ENCODE measurements at regions of chr5 and their contacts with region 1.

Region 1: DNA sequence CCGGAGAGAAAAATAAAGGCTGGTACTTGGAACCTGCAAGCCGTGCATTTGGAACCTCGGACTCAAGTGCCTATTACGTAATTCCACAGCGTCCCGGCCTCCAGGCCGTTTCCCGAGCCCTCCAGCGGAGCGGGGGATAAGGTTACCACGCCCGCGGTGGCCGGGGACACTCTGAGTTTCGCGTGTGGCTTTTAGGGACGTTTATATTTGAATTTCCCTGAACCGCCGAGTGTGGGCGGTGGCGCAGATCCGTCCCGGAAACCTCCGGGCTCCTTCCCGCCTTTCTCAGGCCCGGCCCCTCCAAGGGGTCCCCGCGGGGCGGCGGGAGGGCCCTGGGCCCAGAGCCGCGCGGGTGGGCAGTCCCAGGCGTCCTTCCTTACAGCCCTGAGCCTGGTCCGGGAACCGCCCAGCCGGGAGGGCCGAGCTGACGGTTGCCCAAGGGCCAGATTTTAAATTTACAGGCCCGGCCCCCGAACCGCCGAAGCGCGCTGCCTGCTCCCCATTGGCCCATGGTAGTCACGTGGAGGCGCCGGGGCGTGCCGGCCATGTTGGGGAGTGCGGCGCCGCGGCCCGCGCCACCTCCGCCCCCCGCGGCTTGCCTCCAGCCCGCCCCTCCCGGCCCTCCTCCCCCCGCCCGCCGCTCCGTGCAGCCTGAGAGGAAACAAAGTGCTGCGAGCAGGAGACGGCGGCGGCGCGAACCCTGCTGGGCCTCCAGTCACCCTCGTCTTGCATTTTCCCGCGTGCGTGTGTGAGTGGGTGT is at the start of gene LMNB1:
- DNase-seq: peak; percentile 78 to 97
- H3K4me3 ChIP-seq: peak within 1 kb of the TSS; percentile 67 to 75
- H3K27ac ChIP-seq: peak within 1 kb of the TSS; percentile 86 to 90
- H3K4me1 ChIP-seq: peaks cover 0 to 7% of the 10 kb centered on the region in 2 donors
- H3K27me3 ChIP-seq: no peaks in the 10 kb centered on the region
- CTCF ChIP-seq: peak in 2 of 3 experiments; percentile 28 to 35
- total RNA-seq, gene LMNB1: 1.3 TPM

Region 2: DNA sequence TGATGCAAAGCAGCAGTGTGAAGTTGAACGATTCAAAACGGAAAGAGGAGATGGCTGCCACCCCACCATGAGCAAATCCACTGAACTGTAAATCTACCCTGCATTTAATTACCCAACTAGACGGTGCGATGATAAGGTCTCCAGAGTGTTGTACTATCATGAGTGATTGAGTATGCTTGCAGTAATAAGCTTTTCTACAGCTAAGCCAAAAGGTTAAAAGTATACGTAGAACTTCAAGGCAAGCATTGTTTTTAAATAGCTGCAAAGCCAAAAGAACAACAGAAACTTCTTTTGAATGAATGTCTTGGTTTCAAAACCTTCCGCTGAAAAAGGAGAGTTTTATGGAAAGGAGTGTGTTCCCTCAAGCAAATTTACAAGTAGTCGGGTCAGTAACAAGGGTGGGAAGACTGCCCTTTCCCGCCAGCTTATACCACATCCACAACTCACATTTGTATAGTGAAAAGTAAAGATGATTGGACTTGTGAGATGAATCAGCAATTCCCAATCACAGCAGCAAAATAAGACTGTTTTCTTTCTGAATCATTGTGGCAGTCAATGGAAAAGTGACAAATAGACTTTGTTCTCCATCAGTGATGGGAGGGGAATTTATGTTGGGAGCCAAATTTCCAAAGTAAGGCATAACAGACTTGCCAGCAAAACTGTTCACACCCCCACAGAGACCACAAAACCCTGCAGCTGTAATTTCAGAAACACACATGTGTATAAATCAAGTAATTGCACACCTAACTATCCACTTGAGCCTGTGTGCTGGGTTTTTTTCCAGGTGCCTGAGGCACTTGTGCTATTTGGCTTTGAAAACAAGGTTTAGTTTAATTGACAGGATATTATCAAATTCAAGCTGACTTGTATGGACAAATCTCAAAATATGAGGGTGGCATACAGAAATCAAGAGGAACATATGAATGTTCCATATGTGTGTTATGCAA is 761.2 kb before region 1 on chr5:
- intact Hi-C with region 1: no loop called
- DNase-seq: no peak
- H3K4me3 ChIP-seq: no peak overlapping the region
- H3K27ac ChIP-seq: peak overlapping the region in 1 of 2 donors; percentile 6
- H3K4me1 ChIP-seq: peaks cover 0 to 3% of the 10 kb centered on the region in 2 donors
- H3K27me3 ChIP-seq: no peaks in the 10 kb centered on the region
- CTCF ChIP-seq: no peak

Region 3: DNA sequence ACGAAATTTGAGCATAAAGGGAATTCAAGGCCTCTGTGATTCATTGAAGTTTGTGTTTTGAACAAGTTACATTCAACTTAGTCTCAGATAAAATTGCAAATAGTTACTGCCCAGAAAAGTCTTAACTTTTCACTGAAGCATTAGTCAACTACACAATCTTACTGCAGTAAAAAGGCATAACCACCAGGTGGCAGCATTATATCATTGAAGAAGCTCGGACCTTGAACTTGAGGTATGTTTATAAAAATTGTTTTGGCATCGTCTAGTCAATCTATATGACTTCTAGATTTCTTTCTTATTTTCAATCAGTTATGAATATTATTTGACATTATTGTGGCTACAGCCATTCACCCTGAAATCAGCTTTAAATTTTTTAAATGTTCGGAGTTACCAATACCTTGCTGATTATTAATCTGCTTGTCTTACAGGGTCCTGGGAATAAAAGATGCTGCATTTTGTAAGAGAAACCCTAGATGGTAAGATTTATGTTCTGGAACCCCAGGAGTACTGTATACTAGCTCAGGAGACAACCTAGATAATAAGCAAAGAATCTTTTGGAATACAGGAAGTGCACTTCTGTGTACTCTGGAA is 437.4 kb before region 1 on chr5:
- intact Hi-C with region 1: loop called (anchors 5 kb)
- DNase-seq: no peak
- H3K4me3 ChIP-seq: no peak overlapping the region
- H3K27ac ChIP-seq: no peak overlapping the region
- H3K4me1 ChIP-seq: peaks cover 0 to 7% of the 10 kb centered on the region in 2 donors
- H3K27me3 ChIP-seq: no peaks in the 10 kb centered on the region
- CTCF ChIP-seq: peak; percentile 57 to 83 (median 66)

Region 4: DNA sequence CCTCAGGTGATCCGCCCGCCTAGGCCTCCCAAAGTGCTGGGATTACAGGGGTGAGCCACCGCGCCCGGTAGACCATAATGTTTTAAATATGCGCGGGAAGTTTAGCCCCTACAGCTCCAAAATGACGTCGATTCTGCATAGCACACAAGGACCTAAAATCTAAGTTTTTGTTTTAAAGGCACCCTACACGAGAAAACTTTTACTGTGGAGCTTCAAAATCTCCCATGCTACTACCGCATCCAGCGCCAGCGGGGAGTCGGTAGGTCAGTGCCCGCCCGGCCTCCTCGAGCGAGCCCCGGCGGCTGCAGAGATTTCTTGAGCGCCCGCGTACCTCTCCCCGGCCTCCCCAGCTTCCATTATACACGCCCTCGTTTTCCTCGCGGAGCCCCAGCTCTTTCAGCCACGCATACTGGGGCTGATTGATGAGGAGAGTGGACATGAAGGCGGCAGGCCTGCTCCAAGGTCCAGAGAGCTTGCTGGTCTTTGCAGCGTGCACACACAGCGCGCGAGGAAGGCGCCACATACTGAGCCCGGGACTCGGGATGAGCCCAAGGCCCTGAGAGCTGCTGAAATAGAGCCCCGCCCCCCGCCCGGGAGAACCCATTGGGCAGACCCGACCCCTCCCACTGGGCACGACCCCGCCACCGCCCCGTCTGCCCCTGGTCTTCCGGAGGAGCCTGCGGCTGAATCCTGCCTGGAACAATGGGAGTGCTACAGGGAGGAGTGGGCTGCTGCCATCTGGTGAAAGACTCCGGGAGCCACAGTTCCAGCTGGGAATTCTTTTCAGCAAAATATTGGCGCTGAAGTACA is 181.8 kb before region 1 on chr5 and contains the start of gene ALDH7A1:
- intact Hi-C with region 1: loop called (anchors 5 kb)
- DNase-seq: peak; percentile 48 to 93
- H3K4me3 ChIP-seq: peak within 1 kb of the TSS; percentile 67 to 88
- H3K27ac ChIP-seq: peak within 1 kb of the TSS; percentile 53 to 82
- H3K4me1 ChIP-seq: peaks cover 4% of the 10 kb centered on the region in 2 donors
- H3K27me3 ChIP-seq: no peaks in the 10 kb centered on the region
- CTCF ChIP-seq: peak in 2 of 3 experiments; percentile 41 to 50
- total RNA-seq, gene ALDH7A1: 1.4 TPM

Region 5: DNA sequence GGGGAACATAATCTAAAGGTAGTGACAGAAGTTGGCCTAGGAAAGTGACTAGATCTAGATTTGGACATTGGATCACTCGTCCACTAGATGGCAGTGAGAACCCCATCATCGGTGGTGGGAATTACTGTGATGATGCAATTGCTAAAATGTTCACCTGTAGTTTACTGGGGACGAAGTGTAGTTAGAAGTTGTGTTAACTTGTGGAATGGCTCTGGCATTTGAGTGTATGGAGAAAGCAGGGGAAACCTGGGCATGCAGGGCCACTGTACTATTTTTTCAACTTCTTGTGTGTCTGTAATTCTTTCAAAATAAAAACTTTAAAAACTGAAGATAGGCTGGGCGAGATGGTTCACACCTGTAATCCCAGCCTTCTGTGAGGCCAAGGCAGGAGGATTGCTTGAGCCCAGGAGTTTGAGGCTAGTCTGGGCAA is 100.5 kb before region 1 on chr5:
- intact Hi-C with region 1: loop called (anchors 1 kb)
- DNase-seq: peak in 1 of 2 donors; percentile 67
- H3K4me3 ChIP-seq: no peak overlapping the region
- H3K27ac ChIP-seq: no peak overlapping the region
- H3K4me1 ChIP-seq: no peaks in the 10 kb centered on the region
- H3K27me3 ChIP-seq: no peaks in the 10 kb centered on the region
- CTCF ChIP-seq: peak; percentile 61 to 78 (median 63)

Region 6: GRCh38 chr5:126718246-126718868 is 58.3 kb before region 1 on chr5:
- intact Hi-C with region 1: no loop called
- DNase-seq: no peak
- H3K4me3 ChIP-seq: no peak overlapping the region
- H3K27ac ChIP-seq: no peak overlapping the region
- H3K4me1 ChIP-seq: no peaks in the 10 kb centered on the region
- H3K27me3 ChIP-seq: no peaks in the 10 kb centered on the region
- CTCF ChIP-seq: no peak

Region 7: GRCh38 chr5:126869005-126869451 is 92.4 kb after region 1 on chr5:
- intact Hi-C with region 1: no loop called
- DNase-seq: no peak
- H3K4me3 ChIP-seq: no peak overlapping the region
- H3K27ac ChIP-seq: no peak overlapping the region
- H3K4me1 ChIP-seq: no peaks in the 10 kb centered on the region
- H3K27me3 ChIP-seq: no peaks in the 10 kb centered on the region
- CTCF ChIP-seq: no peak

Region 8: DNA sequence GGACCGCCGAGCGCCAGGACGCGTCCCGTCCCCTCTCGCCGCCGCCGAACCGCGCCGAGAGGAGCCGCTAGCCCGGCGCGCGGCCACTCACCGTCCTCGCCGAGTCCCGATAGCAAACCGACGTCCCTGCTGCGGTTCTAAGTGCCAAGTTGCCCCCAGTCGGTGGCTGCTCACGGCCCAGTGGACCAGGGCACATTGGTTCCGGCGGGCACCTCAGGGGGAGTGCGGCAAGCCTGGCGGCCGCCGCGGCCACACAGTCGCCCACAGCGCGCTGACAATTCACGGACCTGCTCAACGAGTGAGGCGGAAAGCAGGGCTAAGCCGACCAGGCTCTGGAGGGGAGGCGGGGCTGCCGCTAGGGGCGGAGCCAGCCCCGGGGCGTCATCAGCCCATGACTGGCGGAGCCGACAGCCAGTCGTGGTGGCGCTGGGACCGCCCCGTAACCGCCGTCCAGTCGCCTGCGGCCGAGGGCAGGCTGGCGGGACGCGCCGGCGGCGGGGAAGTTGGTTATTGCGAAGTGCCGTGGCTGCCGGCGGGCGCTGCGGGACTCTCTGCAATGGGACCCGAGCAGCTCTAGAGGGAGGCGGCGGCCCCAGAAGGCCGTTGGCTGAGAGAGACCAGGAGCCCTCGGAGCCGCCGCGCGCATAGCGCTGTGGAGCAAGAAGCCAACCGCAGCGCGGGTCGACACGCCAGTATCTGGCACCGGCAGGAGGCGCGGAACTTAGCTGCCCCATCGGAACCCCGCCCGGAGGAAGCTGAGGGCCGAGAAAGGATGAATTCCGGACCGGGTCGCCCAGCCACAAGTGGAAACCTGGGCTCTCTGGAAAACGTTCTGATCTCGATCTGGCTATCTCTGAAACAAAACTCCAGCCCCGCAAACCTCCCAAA is 253.8 kb after region 1 on chr5 and contains the start of gene MARCHF3:
- intact Hi-C with region 1: loop called (anchors 2 kb)
- DNase-seq: peak; percentile 85 to 97
- H3K4me3 ChIP-seq: peak within 1 kb of the TSS; percentile 80
- H3K27ac ChIP-seq: peak within 1 kb of the TSS; percentile 90 to 94
- H3K4me1 ChIP-seq: peaks cover 0 to 9% of the 10 kb centered on the region in 2 donors
- H3K27me3 ChIP-seq: no peaks in the 10 kb centered on the region
- CTCF ChIP-seq: peak in 1 of 3 experiments; percentile 18
- total RNA-seq, gene MARCHF3: 22.6 TPM

Region 9: DNA sequence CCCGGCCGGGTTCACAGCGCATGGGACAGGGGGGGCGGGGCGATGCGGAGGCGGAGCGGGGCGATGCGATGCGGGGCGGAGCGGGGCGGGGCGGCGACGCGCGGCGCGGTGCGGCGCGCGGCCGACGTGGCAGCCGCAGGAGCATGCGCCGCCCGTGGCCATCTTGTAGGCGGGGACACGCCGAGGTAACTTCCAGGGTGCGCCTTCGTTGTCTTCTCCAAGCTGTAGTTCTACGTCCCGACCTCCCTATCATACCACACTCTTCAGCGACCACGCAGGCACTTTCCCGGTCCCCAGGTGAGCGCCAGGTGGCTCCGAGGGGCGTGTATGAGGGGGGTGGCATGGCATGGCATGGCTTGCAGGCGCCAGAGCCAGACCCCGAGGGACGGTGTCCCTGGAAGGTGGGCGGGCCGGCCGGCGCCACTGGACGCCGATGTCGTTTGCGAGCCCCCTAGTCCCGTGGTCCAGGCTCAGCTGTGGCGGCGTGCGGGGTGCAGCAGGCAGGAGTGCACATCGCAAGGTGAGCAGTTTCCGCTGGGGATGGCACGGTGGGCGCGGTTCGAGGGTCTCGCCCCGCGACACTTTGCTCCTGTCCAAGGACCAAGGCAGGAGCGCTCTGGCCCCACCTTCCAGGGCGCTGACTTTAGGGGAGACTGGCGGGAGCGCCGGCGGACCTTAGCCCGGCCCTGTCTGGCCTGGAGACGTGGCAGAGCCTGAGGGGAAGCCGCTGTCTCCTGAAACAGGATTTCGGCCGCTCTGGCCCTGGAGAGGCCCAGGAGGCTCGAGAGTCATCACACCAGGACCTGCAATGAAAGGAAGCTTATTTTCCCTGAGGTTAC is 741.0 kb after region 1 on chr5 and contains the start of gene PRRC1:
- intact Hi-C with region 1: loop called (anchors 5 kb)
- DNase-seq: peak; percentile 10 to 86
- H3K4me3 ChIP-seq: peak within 1 kb of the TSS; percentile 88 to 94
- H3K27ac ChIP-seq: peak within 1 kb of the TSS; percentile 67 to 68
- H3K4me1 ChIP-seq: peaks cover 2 to 10% of the 10 kb centered on the region in 2 donors
- H3K27me3 ChIP-seq: no peaks in the 10 kb centered on the region
- CTCF ChIP-seq: no peak
- total RNA-seq, gene PRRC1: 39.5 TPM